WTC11 (cell line): ENCODE measurements at regions of chr15 and their contacts with region 1.

Region 1: GRCh38 chr15:47987908-47988532 is 132.8 kb upstream of the SLC24A5 start:
- DNase-seq: no peak
- ATAC-seq: peak; percentile 94
- H3K4me3 Mint-ChIP-seq: no peak overlapping the region
- H3K27ac Mint-ChIP-seq: no peak overlapping the region
- H3K4me1 Mint-ChIP-seq: peaks cover 8% of the 10 kb centered on the region
- H3K27me3 Mint-ChIP-seq: no peaks in the 10 kb centered on the region
- CTCF ChIP-seq: no peak; the same call in none of the 2 replicates

Region 2: DNA sequence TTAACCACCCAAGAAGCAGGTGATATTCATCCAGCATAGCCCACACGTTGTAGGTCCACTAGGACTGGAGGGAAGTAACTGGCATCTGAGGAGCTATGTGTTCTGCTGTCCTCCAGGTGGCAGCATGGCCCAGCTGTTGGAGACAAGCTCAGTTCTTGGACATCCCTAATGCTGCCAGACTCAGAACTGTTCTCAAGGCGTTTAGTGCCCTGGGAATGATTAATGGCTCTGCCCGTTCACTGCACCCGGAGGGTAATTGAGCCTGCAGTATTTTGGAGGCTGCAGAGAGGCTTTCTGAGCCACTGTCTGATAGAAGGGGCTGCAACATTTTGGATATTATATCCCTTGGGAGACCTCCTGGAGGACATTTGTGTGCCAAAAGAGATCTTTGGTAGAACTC is 792.0 kb before region 1 on chr15:
- CTCF ChIA-PET with region 1: interaction called, 34 read pairs
- POLR2A ChIA-PET with region 1: no interaction called
- DNase-seq: peak; percentile 83
- ATAC-seq: peak; percentile 94
- H3K4me3 Mint-ChIP-seq: peak overlapping the region; percentile 47
- H3K27ac Mint-ChIP-seq: no peak overlapping the region
- H3K4me1 Mint-ChIP-seq: peaks cover 46% of the 10 kb centered on the region
- H3K27me3 Mint-ChIP-seq: peaks cover 30% of the 10 kb centered on the region
- CTCF ChIP-seq: peak; percentile 61

Region 3: GRCh38 chr15:47711654-47712053 is 276.4 kb before region 1 on chr15:
- CTCF ChIA-PET with region 1: interaction called, 28 read pairs
- POLR2A ChIA-PET with region 1: interaction called, 4 read pairs
- DNase-seq: no peak
- ATAC-seq: no peak
- H3K4me3 Mint-ChIP-seq: no peak overlapping the region
- H3K27ac Mint-ChIP-seq: no peak overlapping the region
- H3K4me1 Mint-ChIP-seq: peaks cover 21% of the 10 kb centered on the region
- H3K27me3 Mint-ChIP-seq: peaks cover 18% of the 10 kb centered on the region
- CTCF ChIP-seq: peak; percentile 42; the same call in 1 of the 2 replicates

Region 4: GRCh38 chr15:47812436-47813109 is 175.4 kb before region 1 on chr15:
- CTCF ChIA-PET with region 1: no interaction called
- POLR2A ChIA-PET with region 1: no interaction called
- DNase-seq: no peak
- ATAC-seq: no peak
- H3K4me3 Mint-ChIP-seq: no peak overlapping the region
- H3K27ac Mint-ChIP-seq: no peak overlapping the region
- H3K4me1 Mint-ChIP-seq: peaks cover 6% of the 10 kb centered on the region
- H3K27me3 Mint-ChIP-seq: no peaks in the 10 kb centered on the region
- CTCF ChIP-seq: no peak

Region 5: GRCh38 chr15:47908950-47909670 is 78.9 kb before region 1 on chr15:
- CTCF ChIA-PET with region 1: interaction called, 45 read pairs
- POLR2A ChIA-PET with region 1: no interaction called
- DNase-seq: no peak
- ATAC-seq: no peak
- H3K4me3 Mint-ChIP-seq: no peak overlapping the region
- H3K27ac Mint-ChIP-seq: no peak overlapping the region
- H3K4me1 Mint-ChIP-seq: no peaks in the 10 kb centered on the region
- H3K27me3 Mint-ChIP-seq: no peaks in the 10 kb centered on the region; the same call in 1 of the 2 replicates
- CTCF ChIP-seq: no peak

Region 6: GRCh38 chr15:47998619-47999019 is 10.6 kb after region 1 on chr15:
- CTCF ChIA-PET with region 1: interaction called, 11 read pairs
- POLR2A ChIA-PET with region 1: no interaction called
- DNase-seq: no peak
- ATAC-seq: no peak
- H3K4me3 Mint-ChIP-seq: no peak overlapping the region
- H3K27ac Mint-ChIP-seq: no peak overlapping the region
- H3K4me1 Mint-ChIP-seq: peaks cover 16% of the 10 kb centered on the region
- H3K27me3 Mint-ChIP-seq: no peaks in the 10 kb centered on the region; the same call in 1 of the 2 replicates
- CTCF ChIP-seq: no peak